H1 (cell line): ENCODE measurements at regions of chr1 and their contacts with region 1.

Region 1: GRCh38 chr1:53681977-53682685 is 56.8 kb downstream of the GLIS1 start:
- DNase-seq: peak; percentile 54 to 76
- H3K4me3 ChIP-seq: no peak overlapping the region
- H3K27ac ChIP-seq: no peak overlapping the region
- H3K4me1 ChIP-seq: peaks cover 4 to 15% (median 12%) of the 10 kb centered on the region in 4 experiments
- H3K27me3 ChIP-seq: peaks cover 0 to 11% (median 4%) of the 10 kb centered on the region in 4 experiments; a peak in 3 of 7 replicates
- CTCF ChIP-seq: peak; percentile 94 to 97 (median 95)
- EP300 ChIP-seq: no peak
- POLR2A ChIP-seq: no peak
- RAD21 ChIP-seq: peak; percentile 89 to 95

Region 2: GRCh38 chr1:53616927-53617326 is 65.2 kb before region 1 on chr1:
- CTCF ChIA-PET with region 1: interaction called, 18 read pairs
- POLR2A ChIA-PET with region 1: no interaction called
- DNase-seq: no peak
- H3K4me3 ChIP-seq: no peak overlapping the region
- H3K27ac ChIP-seq: no peak overlapping the region
- H3K4me1 ChIP-seq: peaks cover 2 to 3% (median 3%) of the 10 kb centered on the region in 4 experiments; a peak in 5 of 7 replicates
- H3K27me3 ChIP-seq: no peaks in the 10 kb centered on the region
- CTCF ChIP-seq: peak; percentile 49 to 63 (median 60)
- EP300 ChIP-seq: no peak
- POLR2A ChIP-seq: no peak
- RAD21 ChIP-seq: peak; percentile 38 to 69

Region 3: DNA sequence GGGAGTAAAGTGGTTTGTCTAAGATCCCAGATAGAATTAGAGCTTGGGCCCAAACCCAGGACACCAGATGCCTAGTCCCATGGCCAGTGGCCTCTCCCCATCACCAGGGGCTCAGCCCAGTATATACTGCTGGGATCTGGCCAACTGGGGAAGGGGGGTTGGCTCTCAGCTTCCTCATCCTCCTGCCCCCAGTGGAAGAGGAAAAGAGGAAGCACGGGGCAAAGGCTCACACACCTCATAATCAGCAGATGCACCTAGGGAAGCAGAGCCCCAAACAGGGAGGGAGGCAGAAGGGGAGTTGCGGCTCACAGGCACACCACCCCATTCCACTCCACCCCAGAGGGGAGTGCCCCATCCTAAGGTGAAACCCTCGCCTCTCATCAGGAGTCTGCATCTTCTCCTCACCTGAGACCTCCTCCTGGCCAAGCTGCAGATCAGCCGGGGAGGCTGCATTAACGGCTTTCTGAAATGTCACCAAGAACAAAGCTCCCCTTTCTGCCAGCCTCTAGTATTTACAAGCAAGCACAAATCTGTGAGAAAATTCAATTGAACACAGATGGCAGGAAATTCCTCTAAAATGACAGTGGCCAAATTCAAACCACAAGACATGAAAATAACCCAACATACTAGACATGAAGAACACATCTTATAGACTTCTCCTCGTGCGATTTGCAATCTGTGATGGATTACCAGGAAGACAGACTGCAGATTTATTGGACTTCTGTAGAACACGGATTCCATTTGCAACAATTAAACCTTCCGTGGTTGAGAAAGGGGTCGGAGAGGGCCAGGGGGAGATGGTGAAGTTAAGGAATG is 26.0 kb before region 1 on chr1:
- CTCF ChIA-PET with region 1: interaction called, 13 read pairs
- POLR2A ChIA-PET with region 1: interaction called, 3 read pairs
- DNase-seq: no peak
- H3K4me3 ChIP-seq: no peak overlapping the region
- H3K27ac ChIP-seq: no peak overlapping the region
- H3K4me1 ChIP-seq: no peaks in the 10 kb centered on the region; a peak in 2 of 7 replicates
- H3K27me3 ChIP-seq: no peaks in the 10 kb centered on the region; a peak in 1 of 7 replicates
- CTCF ChIP-seq: no peak
- EP300 ChIP-seq: no peak
- POLR2A ChIP-seq: no peak
- RAD21 ChIP-seq: no peak

Region 4: DNA sequence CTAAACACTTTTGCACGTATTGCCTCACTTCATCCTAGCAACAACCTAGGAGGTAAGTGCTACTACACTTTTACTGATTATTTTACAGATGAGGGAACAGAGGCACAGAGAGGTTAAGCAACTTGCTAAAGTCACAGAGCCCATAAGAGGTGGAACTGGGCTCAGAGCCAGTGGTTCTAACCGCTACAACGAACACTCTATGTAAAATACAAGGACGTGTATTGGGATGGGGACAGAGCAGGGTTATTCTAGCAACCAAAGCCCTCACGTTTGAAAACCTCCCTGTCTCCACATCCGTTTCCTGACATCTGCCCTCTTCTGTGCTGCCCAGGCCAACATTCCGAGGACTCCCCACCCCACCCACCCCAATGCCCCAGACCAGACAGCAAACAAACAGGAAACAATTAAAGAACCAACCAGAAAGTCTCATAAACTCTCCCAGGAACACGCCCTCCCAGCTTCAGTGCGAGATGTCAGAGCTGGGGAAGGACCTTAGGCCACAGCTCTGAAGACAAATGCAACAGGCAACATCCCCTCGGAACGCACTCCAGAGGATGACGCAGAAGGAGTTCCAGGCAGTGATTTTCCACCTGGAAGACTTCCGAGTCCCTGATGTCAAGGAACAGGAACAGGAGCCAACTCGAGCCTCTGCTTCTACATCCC is 15.7 kb after region 1 on chr1:
- CTCF ChIA-PET with region 1: interaction called, 74 read pairs
- POLR2A ChIA-PET with region 1: interaction called, 3 read pairs
- DNase-seq: no peak
- H3K4me3 ChIP-seq: no peak overlapping the region
- H3K27ac ChIP-seq: no peak overlapping the region
- H3K4me1 ChIP-seq: peaks cover 0 to 16% (median 10%) of the 10 kb centered on the region in 4 experiments; a peak in 5 of 7 replicates
- H3K27me3 ChIP-seq: no peaks in the 10 kb centered on the region; a peak in 1 of 7 replicates
- CTCF ChIP-seq: no peak
- EP300 ChIP-seq: no peak
- POLR2A ChIP-seq: no peak
- RAD21 ChIP-seq: no peak

Region 5: GRCh38 chr1:53725238-53725689 is 43.1 kb after region 1 on chr1:
- CTCF ChIA-PET with region 1: interaction called, 12 read pairs
- POLR2A ChIA-PET with region 1: no interaction called
- DNase-seq: peak; percentile 36 to 72
- H3K4me3 ChIP-seq: no peak overlapping the region
- H3K27ac ChIP-seq: no peak overlapping the region
- H3K4me1 ChIP-seq: peaks cover 0 to 3% (median 1%) of the 10 kb centered on the region in 4 experiments; a peak in 3 of 7 replicates
- H3K27me3 ChIP-seq: no peaks in the 10 kb centered on the region; a peak in 1 of 7 replicates
- CTCF ChIP-seq: peak; percentile 80 to 98 (median 81)
- EP300 ChIP-seq: no peak
- POLR2A ChIP-seq: no peak
- RAD21 ChIP-seq: peak; percentile 78 to 87